ENCODE measurements at regions of chr17 and their contacts with region 1.

Region 1: GRCh38 chr17:72171703-72172667 is 51.2 kb downstream of the SOX9 start:
- DNase-seq: no peak
- ATAC-seq: peak; percentile 17
- H3K4me3 Mint-ChIP-seq: no peak overlapping the region
- H3K27ac Mint-ChIP-seq: no peak overlapping the region
- H3K4me1 Mint-ChIP-seq: peaks cover 44% of the 10 kb centered on the region
- H3K27me3 Mint-ChIP-seq: no peaks in the 10 kb centered on the region
- CTCF ChIP-seq: no peak

Region 2: GRCh38 chr17:72104164-72104862 is 67.7 kb before region 1 on chr17:
- CTCF ChIA-PET with region 1: no interaction called
- POLR2A ChIA-PET with region 1: no interaction called
- DNase-seq: no peak
- ATAC-seq: peak; percentile 20
- H3K4me3 Mint-ChIP-seq: no peak overlapping the region
- H3K27ac Mint-ChIP-seq: no peak overlapping the region
- H3K4me1 Mint-ChIP-seq: peaks cover 46% of the 10 kb centered on the region
- H3K27me3 Mint-ChIP-seq: peaks cover 4% of the 10 kb centered on the region; the same call in 1 of the 2 replicates
- CTCF ChIP-seq: no peak

Region 3: GRCh38 chr17:72120642-72121163 is 51.3 kb before region 1 on chr17 and contains the start of gene SOX9:
- CTCF ChIA-PET with region 1: no interaction called
- POLR2A ChIA-PET with region 1: interaction called, 13 read pairs
- DNase-seq: peak; percentile 89
- ATAC-seq: peak; percentile 75
- H3K4me3 Mint-ChIP-seq: peak within 1 kb of the TSS; percentile 95
- H3K27ac Mint-ChIP-seq: no peak within 1 kb of the TSS
- H3K4me1 Mint-ChIP-seq: peaks cover 51% of the 10 kb centered on the region
- H3K27me3 Mint-ChIP-seq: peaks cover 59% of the 10 kb centered on the region
- CTCF ChIP-seq: no peak
- total RNA-seq, gene SOX9: 8.1 to 9.0 TPM (median 8.9 TPM) in 3 replicates